Dendritic cell treated with granulocyte-macrophage colony-stimulating factor and Interleukin-4, amounts not matched to agents 40 ng/mL and 50 ng/mL, for 4 days (primary cell): ENCODE measurements at regions of chr10 and their contacts with region 1.

Region 1: DNA sequence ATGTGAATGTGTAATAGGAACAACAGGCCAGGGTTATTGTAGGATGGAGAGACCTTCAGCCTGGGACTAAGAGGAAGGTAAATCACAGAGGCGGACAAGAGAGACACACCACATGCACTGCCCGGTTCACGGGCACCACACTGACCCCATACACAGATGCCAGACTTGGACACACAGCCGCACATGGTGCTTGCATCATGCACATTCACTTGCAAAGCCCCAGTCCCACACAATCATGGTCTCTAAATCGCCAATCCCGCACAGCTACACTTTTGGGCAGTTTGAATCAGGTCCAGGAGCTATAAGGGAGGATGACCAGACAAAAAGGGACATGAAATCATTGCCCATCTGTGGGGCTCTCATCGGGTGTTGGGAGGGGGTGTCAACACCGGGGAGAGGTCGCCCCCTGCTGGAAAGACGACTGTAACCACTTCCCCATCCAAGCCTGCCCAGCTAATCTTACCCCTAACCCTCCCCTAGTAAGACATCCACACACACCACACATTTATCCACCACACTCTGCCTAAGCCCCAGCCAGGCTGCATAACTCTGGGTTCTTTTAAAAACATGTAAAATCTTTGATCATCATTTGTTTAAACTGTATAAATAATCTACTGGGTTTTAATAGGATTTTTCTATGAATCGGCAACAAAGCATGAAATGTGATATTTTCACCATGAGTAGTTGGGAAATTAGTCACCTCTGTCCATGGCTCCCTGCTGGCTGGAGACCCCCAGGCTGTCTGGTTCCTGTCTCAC is 40.5 kb upstream of the SLF2 start:
- H3K4me3 Mint-ChIP-seq: no peak overlapping the region
- H3K27ac Mint-ChIP-seq: no peak overlapping the region
- H3K4me1 Mint-ChIP-seq: no peaks in the 10 kb centered on the region
- H3K27me3 Mint-ChIP-seq: peaks cover 25% of the 10 kb centered on the region

Region 2: DNA sequence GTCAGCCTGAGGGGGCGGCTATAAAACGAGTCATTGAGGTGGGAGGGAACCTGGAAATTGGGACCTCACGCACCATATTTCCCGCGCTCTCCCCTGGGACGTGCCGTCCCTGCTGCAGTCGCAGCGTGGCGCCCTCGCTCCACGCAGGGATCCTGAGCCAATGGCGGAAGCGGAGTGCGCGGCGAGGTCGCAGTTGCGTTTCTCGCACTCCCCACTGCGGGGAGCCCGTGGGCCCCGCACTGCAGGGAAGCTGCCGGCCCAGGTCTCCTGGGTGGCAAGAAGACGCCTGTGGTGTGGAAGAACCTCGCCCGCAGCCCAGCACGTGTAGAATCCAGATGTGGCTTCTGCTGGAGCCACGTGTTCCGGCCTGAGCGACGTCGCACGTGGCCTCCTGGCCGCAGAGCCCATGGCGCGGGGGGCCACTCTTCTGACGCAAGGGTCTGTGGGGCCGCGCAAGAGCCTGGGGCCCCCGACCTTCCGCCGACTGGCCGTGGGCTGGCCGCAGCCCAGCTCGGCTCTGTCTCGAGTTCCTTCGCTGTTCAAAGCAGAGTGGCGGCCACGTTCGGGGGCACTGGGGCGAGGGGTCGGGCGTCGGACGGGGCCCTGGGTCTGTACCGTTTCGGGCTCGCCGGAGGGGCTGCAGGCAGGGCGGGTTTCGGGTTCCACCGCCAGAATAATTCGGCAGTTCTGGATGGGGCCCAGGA is 310.1 kb before region 1 on chr10:
- intact Hi-C with region 1: loop called (anchors 5 kb)
- H3K4me3 Mint-ChIP-seq: peak overlapping the region; percentile 41
- H3K27ac Mint-ChIP-seq: no peak overlapping the region
- H3K4me1 Mint-ChIP-seq: peaks cover 17% of the 10 kb centered on the region
- H3K27me3 Mint-ChIP-seq: peaks cover 53% of the 10 kb centered on the region